ENCODE measurements at regions of chr2 and their contacts with region 1.

Region 1: DNA sequence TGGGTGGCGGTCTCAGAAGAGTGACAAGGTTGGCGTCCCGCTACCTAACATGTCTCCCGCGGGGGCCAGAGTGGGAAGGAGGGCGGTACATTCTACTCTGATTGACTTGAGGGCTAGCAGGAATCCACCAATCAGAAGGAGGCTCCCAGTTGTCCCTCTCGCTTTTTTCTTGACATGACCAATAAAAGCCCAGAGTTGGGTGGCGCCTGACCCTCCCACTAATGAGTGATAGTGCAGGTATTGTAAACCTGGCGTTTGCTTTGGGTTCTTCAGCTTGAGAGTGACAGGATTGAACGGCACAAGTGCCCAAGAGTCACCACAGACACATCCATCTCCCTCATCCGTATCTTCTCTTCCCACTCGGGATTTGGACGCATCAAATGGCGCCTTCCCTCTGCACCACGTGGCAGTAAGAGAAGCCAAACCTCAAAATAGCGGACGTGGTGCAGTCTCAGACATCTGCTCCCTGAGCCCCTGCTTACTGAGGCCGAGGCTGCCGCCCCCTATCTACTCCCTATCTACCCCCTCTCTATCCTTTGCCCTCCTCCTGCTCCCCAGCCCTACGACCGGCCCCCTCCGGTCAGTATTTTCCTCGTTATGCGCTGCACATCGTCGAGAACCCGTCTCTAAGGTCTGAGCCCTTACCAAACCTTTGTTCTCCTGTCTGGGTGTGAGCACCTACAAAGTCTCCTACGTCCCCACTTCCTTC is 768 bp upstream of the FAM161A start:
- DNase-seq: peak; percentile 98
- ATAC-seq: peak; percentile 82
- H3K4me3 ChIP-seq: peak overlapping the region; percentile 84
- H3K27ac ChIP-seq: peak overlapping the region; percentile 50
- H3K4me1 ChIP-seq: peaks cover 5% of the 10 kb centered on the region; the same call in 1 of the 2 replicates
- H3K27me3 ChIP-seq: no peaks in the 10 kb centered on the region
- CTCF ChIP-seq: no peak

Region 2: DNA sequence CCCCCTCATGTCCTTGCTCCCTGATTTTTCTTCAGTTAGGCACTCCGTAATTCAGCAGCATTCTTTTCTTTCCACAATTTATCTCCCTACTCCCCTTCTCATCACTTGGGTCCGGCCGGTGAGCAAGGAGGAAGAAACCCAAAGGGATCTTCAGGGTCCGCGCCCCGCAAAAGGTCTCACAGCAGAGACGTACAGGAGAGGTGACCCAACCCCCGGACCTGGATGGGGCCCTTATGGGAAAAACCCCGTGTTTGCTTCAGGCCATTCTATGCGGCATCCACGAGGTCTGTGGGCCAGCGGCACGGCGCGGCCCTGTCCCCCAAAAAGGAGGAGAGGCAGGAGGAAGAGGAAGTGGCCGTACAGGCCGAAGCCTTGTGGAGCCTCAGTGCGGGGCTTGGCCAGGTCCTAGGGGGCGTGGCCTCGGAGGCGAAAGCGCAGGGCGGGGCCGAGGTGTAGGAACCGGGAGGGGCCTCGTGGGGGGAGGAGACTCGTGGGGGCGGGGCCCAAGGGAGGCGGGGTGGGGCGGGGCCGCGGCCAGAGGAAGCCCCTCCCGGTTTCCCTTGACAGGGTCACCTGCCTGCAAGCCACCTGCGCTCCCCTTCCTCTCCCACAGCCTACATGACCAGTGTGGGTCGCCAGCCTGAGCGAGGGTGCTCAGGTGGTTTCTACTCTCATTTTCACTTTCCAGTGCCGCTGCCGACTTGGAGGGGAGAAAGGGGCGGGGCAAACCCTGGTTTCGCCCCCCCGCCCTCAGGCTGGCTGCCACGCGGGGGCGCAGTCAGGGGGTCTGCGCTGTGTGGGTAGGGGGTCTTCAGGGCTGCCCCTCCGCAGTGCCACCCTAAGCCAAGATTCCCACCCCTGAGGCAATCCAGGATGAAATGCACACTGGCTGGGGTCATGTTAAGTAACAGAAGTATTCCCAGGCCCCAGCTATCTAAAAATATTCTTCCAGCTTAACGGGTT is 160.0 kb before region 1 on chr2:
- CTCF ChIA-PET with region 1: no interaction called
- POLR2A ChIA-PET with region 1: no interaction called
- intact Hi-C with region 1: loop called (anchors 10 kb)
- DNase-seq: peak; percentile 89
- ATAC-seq: peak; percentile 99
- H3K4me3 ChIP-seq: peak overlapping the region; percentile 94
- H3K27ac ChIP-seq: no peak overlapping the region
- H3K4me1 ChIP-seq: peaks cover 5% of the 10 kb centered on the region; the same call in 1 of the 2 replicates
- H3K27me3 ChIP-seq: no peaks in the 10 kb centered on the region
- CTCF ChIP-seq: peak; percentile 82

Region 3: GRCh38 chr2:61888267-61889055 is 33.8 kb after region 1 on chr2 and contains the start of gene CCT4:
- CTCF ChIA-PET with region 1: no interaction called
- POLR2A ChIA-PET with region 1: no interaction called
- intact Hi-C with region 1: loop called (anchors 2 kb)
- DNase-seq: peak; percentile 81
- ATAC-seq: peak; percentile 79
- H3K4me3 ChIP-seq: peak within 1 kb of the TSS; percentile 99
- H3K27ac ChIP-seq: peak within 1 kb of the TSS; percentile 73
- H3K4me1 ChIP-seq: peaks cover 21% of the 10 kb centered on the region
- H3K27me3 ChIP-seq: no peaks in the 10 kb centered on the region
- CTCF ChIP-seq: no peak
- total RNA-seq, gene CCT4: 185 and 195 TPM in 2 replicates

Region 4: DNA sequence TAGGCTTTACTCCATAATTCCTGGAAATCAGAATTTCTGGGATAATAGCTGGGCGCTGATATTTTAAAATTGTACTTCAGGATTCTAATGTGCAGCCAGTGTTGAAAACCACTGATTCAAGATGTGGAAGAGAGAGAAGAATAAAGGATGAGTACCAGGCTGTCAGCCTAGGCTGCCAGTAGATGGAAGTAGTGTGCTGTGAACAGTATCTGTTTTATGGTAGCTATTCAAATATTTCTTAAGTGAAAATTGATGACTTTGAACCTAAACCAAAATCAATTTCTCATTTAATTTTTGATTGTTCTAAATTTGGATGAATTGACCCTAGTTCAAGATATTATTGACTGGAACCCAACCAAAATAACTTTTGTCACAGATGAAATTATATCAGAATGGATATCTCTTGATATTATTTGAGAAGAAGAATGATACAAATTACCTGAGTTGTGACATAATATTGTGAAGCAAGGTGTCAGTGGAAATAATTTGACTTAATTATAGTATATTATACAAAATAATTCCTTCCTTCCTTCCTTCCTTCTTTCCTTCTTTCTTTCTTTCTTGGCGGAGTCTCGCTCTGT is 138.9 kb after region 1 on chr2:
- CTCF ChIA-PET with region 1: no interaction called
- POLR2A ChIA-PET with region 1: no interaction called
- intact Hi-C with region 1: no loop called
- DNase-seq: peak; percentile 68
- ATAC-seq: peak; percentile 80
- H3K4me3 ChIP-seq: no peak overlapping the region
- H3K27ac ChIP-seq: no peak overlapping the region
- H3K4me1 ChIP-seq: no peaks in the 10 kb centered on the region
- H3K27me3 ChIP-seq: no peaks in the 10 kb centered on the region
- CTCF ChIP-seq: peak; percentile 89